PC-9 (cell line): ENCODE measurements at regions of chr1 and their contacts with region 1.

Region 1: GRCh38 chr1:227357171-227357880 is 39.0 kb upstream of the CDC42BPA start:
- DNase-seq: peak; percentile 83 to 89
- H3K4me3 ChIP-seq: peak overlapping the region; percentile 4; the same call in 1 of the 2 replicates
- H3K27ac ChIP-seq: peak overlapping the region; percentile 96
- H3K4me1 ChIP-seq: peaks cover 33% of the 10 kb centered on the region
- H3K27me3 ChIP-seq: no peaks in the 10 kb centered on the region
- CTCF ChIP-seq: no peak

Region 2: GRCh38 chr1:227428803-227429202 is 71.5 kb after region 1 on chr1:
- CTCF ChIA-PET with region 1: interaction called, 3 read pairs
- POLR2A ChIA-PET with region 1: interaction called, 4 read pairs
- intact Hi-C with region 1: loop called (anchors 1 kb)
- DNase-seq: peak; percentile 79 to 93
- H3K4me3 ChIP-seq: no peak overlapping the region
- H3K27ac ChIP-seq: peak overlapping the region; percentile 58
- H3K4me1 ChIP-seq: peaks cover 24% of the 10 kb centered on the region
- H3K27me3 ChIP-seq: no peaks in the 10 kb centered on the region
- CTCF ChIP-seq: no peak